Dendritic cell treated with granulocyte-macrophage colony-stimulating factor and Interleukin-4, amounts not matched to agents 40 ng/mL and 50 ng/mL, for 4 days (primary cell): ENCODE measurements at regions of chr2 and their contacts with region 1.

Region 1: GRCh38 chr2:37653805-37654378 is 17.6 kb downstream of the CDC42EP3 start:
- H3K4me3 Mint-ChIP-seq: peak overlapping the region; percentile 40
- H3K27ac Mint-ChIP-seq: peak overlapping the region; percentile 85
- H3K4me1 Mint-ChIP-seq: peaks cover 85% of the 10 kb centered on the region
- H3K27me3 Mint-ChIP-seq: no peaks in the 10 kb centered on the region

Region 2: DNA sequence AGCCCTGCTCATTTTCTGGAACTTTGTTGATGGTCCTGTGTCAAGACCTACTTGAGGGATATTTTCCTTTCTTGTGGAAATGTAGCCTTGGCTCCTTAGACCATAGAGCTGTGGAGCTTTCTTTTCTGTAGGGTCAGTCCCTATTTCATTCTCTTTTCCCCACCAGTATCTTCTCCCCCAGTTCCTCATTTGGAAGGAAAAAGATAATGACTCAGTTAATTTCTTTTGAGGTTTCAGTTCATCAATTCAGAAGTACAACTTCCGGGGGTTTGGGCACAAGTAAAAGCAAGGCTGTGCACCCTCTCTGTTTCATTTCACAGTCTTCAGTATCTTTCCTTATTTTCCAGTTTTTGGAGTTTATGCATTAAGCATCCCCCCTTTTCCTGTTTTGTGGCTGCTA is 53.2 kb before region 1 on chr2:
- intact Hi-C with region 1: loop called (anchors 10 kb)
- H3K4me3 Mint-ChIP-seq: peak overlapping the region; percentile 52
- H3K27ac Mint-ChIP-seq: peak overlapping the region; percentile 84
- H3K4me1 Mint-ChIP-seq: peaks cover 65% of the 10 kb centered on the region
- H3K27me3 Mint-ChIP-seq: no peaks in the 10 kb centered on the region

Region 3: DNA sequence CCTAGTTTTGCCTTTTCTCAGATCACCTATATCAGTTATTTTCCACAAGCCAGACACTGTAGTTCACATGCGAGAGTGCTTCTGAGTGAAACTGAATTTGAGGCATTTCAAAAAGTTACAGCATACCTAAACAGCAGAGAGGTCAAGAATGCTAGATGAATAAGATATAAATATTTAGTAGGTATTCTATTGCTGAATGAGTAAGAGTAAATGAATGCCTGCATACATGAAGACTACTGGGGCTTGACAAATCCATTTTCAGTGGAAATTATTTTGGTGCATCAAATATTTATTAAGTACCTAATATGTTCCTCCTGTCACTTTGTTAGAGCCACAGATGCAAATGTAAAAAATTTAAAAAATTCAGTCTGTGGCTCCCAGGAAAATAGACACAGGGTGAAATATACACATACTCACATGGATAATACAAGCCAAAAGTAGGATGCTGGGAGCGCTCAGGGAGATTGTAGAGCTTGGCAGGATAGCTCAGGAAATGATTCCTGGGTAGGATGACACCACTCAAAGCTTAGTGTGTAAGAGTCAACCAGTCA is 45.1 kb after region 1 on chr2:
- intact Hi-C with region 1: no loop called
- H3K4me3 Mint-ChIP-seq: no peak overlapping the region
- H3K27ac Mint-ChIP-seq: no peak overlapping the region
- H3K4me1 Mint-ChIP-seq: no peaks in the 10 kb centered on the region
- H3K27me3 Mint-ChIP-seq: no peaks in the 10 kb centered on the region

Region 4: GRCh38 chr2:37832590-37833197 is 178.8 kb after region 1 on chr2:
- intact Hi-C with region 1: no loop called
- H3K4me3 Mint-ChIP-seq: no peak overlapping the region
- H3K27ac Mint-ChIP-seq: no peak overlapping the region
- H3K4me1 Mint-ChIP-seq: peaks cover 66% of the 10 kb centered on the region
- H3K27me3 Mint-ChIP-seq: no peaks in the 10 kb centered on the region